ENCODE measurements at regions of chr16 and their contacts with region 1.

Region 1: DNA sequence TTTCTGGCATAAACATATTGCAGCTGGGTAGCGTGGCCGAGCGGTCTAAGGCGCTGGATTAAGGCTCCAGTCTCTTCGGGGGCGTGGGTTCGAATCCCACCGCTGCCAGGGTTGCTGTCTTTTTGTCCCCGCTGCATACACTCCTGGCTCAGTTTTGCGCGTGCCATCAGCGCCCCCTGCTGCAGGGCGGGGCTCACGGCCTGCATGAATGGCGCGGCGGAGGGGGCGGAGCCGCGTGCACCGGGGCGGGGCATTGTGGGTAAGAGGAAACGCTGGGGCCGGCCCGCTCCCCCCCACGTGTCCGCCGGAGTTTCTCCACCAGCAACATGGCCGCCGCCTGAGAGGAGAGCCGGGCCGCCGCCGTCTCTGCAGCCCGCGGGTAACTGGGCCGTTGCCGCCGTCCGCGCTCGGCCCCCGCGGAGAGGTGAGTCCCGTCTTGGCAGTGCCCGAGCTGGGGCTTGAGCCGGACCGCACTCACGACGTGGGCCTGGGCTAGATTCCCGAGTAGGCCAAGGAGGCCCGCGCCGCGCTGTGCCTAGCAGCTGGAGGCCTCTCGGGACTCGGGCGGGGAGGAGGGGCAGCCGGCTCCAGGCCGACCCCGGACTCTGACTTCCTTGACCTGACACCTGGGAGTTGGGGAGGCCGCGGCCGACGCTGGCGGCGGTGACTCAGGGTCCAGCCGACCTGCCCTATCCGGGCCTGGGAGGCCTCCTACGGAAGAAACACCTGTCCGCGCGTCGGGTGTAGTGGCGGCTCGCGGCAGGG is at the start of gene POLR3E:
- DNase-seq: peak; percentile 97 to 100 (median 100)
- ATAC-seq: peak; percentile 89 to 96 (median 92)
- H3K4me3 ChIP-seq: peak within 1 kb of the TSS; percentile 70 to 98 (median 96)
- H3K27ac ChIP-seq: peak within 1 kb of the TSS; percentile 95 to 98 (median 96)
- H3K4me1 ChIP-seq: peaks cover 4 to 14% (median 9%) of the 10 kb centered on the region in 3 donors
- H3K27me3 ChIP-seq: peaks cover 0 to 2% (median 0%) of the 10 kb centered on the region in 4 donors
- CTCF ChIP-seq: peak; percentile 80 to 90 (median 88)
- total RNA-seq, gene POLR3E: 26.3 to 38.3 (median 31.9) TPM

Region 2: DNA sequence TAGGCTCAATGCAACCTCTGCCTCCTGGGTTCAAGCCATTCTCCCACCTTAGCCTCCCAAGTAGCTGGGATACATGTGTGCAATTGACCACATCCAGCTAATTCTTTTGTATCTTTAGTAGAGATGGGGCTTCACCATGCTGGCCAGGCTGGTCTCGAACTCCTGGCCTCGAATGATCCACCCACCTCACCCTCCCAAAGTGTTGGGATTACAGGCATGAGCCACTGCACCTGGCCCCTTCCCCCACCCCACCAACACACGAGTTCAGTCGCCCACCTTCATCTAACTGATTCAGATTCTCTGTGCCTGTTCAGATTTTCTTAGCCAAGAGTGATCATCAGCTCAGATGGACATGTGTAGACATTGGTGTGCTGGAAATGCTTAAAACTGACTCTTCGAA is 722.9 kb before region 1 on chr16:
- intact Hi-C with region 1: no loop called
- DNase-seq: no peak
- ATAC-seq: no peak
- H3K4me3 ChIP-seq: no peak overlapping the region
- H3K27ac ChIP-seq: no peak overlapping the region
- H3K4me1 ChIP-seq: no peaks in the 10 kb centered on the region
- H3K27me3 ChIP-seq: no peaks in the 10 kb centered on the region
- CTCF ChIP-seq: no peak

Region 3: DNA sequence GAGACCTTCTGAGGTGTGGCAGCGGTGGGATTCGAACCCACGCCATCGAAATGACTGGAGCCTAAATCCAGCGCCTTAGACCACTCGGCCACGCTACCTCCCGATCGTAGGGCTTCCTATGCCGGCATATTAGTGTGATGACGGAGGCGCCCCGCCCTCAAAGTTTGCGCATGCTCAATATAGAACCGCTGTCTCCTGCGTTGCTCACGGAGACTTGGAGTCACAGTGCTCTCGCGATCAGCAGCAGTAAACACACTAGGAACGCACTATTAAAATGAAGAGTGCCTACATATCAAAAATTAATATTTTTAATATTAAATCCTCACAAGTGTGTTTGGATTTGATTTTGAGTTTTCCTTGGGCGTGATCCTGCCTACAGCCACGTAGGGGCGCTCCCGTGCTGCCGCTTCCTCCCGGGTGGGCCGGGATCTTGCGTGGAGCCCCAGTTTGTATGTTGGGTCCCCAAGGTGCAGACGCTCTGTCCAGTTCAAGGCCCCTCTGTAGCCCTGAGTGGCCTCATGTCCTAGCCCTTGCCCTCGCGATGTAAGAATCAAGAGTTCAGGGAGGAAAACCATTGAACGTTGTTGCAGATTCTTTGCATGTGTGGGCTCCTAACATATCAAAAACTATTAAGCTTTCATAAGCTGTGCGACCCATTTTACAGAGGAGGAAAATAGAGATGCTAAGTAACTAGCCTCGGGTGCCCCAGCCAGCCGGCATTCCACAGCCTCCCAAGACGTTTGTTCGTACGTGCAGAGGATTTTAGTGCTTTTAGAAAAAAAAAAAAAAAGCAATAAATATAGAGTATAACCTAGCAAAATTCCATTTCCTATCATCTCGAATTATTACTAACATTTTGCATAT is 101.4 kb before region 1 on chr16:
- intact Hi-C with region 1: loop called in 2 of 3 experiments (anchors 5 kb)
- DNase-seq: peak; percentile 80 to 97 (median 90)
- ATAC-seq: peak; percentile 31 to 60 (median 52)
- H3K4me3 ChIP-seq: peak overlapping the region; percentile 5 to 48 (median 26)
- H3K27ac ChIP-seq: peak overlapping the region in 3 of 4 donors; percentile 36 to 74 (median 62)
- H3K4me1 ChIP-seq: peaks cover 0 to 8% (median 0%) of the 10 kb centered on the region in 3 donors
- H3K27me3 ChIP-seq: no peaks in the 10 kb centered on the region
- CTCF ChIP-seq: peak; percentile 45 to 83 (median 78)

Measured in pancreas (tissue), 10 donors.